Mucosa of descending colon (tissue), 3 donors: ENCODE measurements at regions of chr1 and their contacts with region 1.

Region 1: DNA sequence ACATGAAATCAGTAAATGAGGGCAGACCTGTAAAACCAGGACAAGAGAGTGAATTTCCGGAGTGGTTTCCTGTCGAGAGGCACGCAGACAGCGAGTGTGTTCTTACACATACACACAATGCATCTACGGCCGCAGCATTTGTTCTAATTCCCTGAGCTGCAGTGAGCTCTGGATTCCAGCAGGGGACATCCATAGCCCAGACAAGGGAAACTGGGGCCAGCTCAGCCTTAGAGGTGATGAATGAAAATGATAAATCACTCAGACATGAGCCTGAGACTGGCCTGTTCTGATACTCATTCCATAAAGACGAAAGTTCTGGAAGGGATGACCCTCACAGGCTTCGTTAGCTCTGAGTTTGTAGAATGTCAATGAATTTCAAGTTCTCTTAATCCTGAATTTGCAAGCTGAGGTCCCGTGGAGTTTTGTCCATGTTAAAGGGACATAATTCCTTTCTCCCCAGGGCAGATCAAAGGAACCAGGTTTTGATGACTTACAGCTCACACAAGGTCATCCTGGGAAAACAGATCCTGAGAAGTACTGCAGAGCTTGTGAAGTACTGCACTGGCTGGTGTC is 207.9 kb upstream of the C1orf87 start:
- DNase-seq: peak in 2 of 3 donors; percentile 51 to 65
- ATAC-seq: peak; percentile 97
- H3K4me3 ChIP-seq: no peak overlapping the region
- H3K4me1 ChIP-seq: no peaks in the 10 kb centered on the region
- CTCF ChIP-seq: peak; percentile 75

Region 2: DNA sequence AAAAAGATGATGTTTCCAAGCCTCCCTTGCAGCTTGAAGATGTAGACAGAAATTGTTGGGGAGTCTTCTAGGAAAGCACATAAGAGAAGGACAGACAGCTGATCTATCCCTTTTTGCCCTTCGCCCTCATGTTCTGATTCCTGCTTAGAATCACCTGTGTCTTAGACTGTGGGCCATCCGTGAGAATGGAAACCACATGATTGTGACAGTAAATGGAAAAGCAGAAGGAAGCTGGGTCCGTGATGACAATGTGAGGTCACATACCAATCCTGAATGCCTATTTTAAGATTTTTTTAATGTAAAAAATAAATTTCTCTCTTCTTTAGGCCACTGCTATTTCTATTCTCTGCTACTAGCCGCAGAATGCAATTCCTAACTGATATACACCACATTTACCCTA is 140.2 kb before region 1 on chr1:
- intact Hi-C with region 1: no loop called
- DNase-seq: no peak
- ATAC-seq: no peak
- H3K4me3 ChIP-seq: no peak overlapping the region
- H3K4me1 ChIP-seq: no peaks in the 10 kb centered on the region
- CTCF ChIP-seq: no peak

Region 3: DNA sequence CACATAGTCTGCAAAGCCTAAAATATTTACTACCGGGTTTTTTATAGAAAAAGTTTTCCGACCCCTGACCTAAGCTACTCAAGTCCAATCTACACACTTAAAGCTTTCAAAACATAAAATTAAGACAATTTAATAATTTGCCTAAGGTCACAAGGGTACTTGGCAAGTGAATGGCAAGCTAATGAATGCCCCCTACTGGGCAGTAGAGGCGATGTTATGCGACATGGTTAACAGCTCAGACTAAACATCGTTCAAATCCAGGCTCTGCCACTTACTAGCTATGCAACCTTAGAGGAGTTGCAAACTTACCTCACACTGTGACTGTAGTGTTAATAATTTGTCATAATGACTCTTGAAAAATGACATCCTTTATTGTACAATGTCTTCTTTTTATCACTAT is 483.8 kb after region 1 on chr1:
- intact Hi-C with region 1: loop called in 1 of 2 experiments (anchors 10 kb)
- DNase-seq: peak in 1 of 3 donors; percentile 61
- ATAC-seq: peak; percentile 44
- H3K4me3 ChIP-seq: no peak overlapping the region
- H3K4me1 ChIP-seq: no peaks in the 10 kb centered on the region
- CTCF ChIP-seq: peak; percentile 24